ENCODE measurements at regions of chr21 and their contacts with region 1.

Region 1: DNA sequence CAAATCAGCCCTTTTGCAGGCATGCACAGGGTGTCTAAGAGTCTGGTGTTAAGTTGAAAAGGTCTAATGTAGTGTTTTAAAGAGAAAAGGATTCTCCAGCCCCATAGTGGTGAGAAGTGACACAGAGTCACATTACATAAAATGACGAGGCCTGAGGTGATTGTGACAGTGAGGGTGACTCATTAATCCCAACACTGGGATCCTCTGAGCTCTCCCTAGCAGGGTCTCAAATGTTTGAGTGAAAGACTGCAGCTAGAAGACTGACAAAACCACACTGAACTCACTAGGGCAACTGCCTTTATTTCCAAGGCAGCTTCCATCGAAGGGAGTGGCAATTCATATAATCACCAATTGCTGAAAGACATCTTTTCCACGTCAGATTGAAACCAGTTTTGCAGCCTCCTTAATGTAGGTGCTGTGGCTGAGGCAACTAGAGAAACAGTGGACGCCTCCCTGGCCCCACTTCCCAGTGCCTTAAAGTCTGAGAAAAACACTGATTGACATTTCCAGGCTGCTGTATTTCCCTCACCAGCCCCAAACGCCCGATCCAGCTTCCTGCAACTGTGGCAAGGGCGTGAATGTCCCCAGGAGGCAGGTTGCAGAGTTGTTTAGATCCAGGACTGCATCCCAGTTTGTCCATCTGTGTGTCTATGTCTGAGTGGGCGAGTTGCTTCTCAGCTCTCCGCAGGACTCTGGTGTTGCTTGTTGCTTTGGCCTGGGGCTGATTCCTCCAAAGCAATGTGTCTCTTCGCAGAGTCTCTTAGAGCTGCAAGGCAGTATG is 81.4 kb downstream of the RUNX1 start:
- DNase-seq: peak; percentile 75
- H3K4me3 Mint-ChIP-seq: peak overlapping the region; percentile 55
- H3K27ac Mint-ChIP-seq: peak overlapping the region; percentile 95
- H3K4me1 Mint-ChIP-seq: peaks cover 88% of the 10 kb centered on the region
- H3K27me3 Mint-ChIP-seq: no peaks in the 10 kb centered on the region

Region 2: DNA sequence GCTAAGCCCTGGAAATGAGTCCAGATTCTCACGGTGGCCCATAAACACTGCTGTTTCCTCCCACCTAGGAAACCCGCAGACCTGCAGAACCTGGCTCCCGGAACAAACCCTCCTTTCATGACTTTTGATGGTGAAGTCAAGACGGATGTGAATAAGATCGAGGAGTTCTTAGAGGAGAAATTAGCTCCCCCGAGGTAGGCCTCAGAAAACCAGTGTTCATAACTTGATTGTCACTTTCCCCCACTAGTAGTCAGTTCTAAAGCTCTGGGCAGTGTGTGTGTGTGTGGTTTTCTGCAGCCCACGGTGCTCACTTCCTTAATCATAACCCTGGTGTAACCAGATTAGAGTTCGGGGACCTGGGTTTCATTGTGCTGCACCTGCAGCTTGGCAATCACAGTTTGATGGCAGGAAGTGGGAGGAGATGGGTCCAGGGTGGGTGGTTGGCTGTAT is 259.8 kb before region 1 on chr21:
- CTCF ChIA-PET with region 1: no interaction called
- POLR2A ChIA-PET with region 1: no interaction called
- intact Hi-C with region 1: loop called (anchors 5 kb)
- DNase-seq: peak; percentile 85
- H3K4me3 Mint-ChIP-seq: no peak overlapping the region
- H3K27ac Mint-ChIP-seq: peak overlapping the region; percentile 15
- H3K4me1 Mint-ChIP-seq: peaks cover 20% of the 10 kb centered on the region
- H3K27me3 Mint-ChIP-seq: peaks cover 41% of the 10 kb centered on the region

Region 3: GRCh38 chr21:34933609-34934335 is 33.9 kb before region 1 on chr21:
- CTCF ChIA-PET with region 1: interaction called, 7 read pairs
- POLR2A ChIA-PET with region 1: interaction called, 12 read pairs
- intact Hi-C with region 1: loop called (anchors 1 kb)
- DNase-seq: peak; percentile 43
- H3K4me3 Mint-ChIP-seq: peak overlapping the region; percentile 77
- H3K27ac Mint-ChIP-seq: peak overlapping the region; percentile 97
- H3K4me1 Mint-ChIP-seq: peaks cover 83% of the 10 kb centered on the region
- H3K27me3 Mint-ChIP-seq: no peaks in the 10 kb centered on the region

Region 4: GRCh38 chr21:34946916-34947534 is 20.7 kb before region 1 on chr21:
- CTCF ChIA-PET with region 1: interaction called, 7 read pairs
- POLR2A ChIA-PET with region 1: interaction called, 13 read pairs
- intact Hi-C with region 1: loop called (anchors 1 kb)
- DNase-seq: no peak
- H3K4me3 Mint-ChIP-seq: no peak overlapping the region
- H3K27ac Mint-ChIP-seq: peak overlapping the region; percentile 88
- H3K4me1 Mint-ChIP-seq: peaks cover 90% of the 10 kb centered on the region
- H3K27me3 Mint-ChIP-seq: no peaks in the 10 kb centered on the region

Region 5: DNA sequence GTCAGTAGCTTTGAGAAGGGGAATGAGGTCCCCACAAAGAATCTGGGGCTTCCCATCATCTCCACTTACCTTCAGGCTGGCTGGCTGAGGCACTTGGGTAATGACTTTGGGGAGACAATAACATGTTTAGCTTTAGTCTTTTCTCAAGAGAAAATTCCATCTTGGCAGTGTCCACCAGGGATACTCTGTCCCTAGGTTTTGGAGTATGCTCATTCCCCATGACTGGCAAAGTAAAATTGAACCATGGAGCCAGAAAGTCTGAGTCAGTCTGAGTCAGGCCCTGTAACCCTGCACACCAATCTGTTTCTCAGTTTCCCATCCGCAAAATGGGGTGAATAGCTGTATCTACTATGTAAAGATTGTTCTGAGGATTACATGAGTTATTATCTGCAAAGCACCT is 53.2 kb after region 1 on chr21:
- CTCF ChIA-PET with region 1: no interaction called
- POLR2A ChIA-PET with region 1: interaction called, 5 read pairs
- intact Hi-C with region 1: loop called (anchors 1 kb)
- DNase-seq: no peak
- H3K4me3 Mint-ChIP-seq: no peak overlapping the region
- H3K27ac Mint-ChIP-seq: peak overlapping the region; percentile 65
- H3K4me1 Mint-ChIP-seq: peaks cover 85% of the 10 kb centered on the region
- H3K27me3 Mint-ChIP-seq: no peaks in the 10 kb centered on the region

Region 6: DNA sequence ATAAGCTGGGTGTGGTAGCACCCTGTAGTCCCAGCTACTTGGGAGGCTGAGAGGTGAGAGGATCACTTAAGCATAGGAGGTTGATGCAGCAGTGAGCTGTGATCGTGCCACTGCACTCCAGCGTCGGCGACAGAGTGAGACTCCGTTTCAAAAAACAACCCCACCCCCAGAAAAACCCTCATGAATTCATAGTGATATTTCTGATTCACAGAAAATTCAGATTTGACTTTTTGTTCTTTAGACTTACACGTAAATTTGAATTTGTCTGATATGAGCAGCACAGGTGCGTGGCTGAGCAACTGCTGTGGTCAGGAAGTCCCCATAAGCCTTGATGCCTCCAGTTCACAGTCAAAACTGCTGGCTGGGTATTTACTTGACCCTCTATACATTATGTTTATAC is 1342.3 kb after region 1 on chr21:
- CTCF ChIA-PET with region 1: no interaction called
- POLR2A ChIA-PET with region 1: no interaction called
- intact Hi-C with region 1: loop called (anchors 5 kb)
- DNase-seq: peak; percentile 86
- H3K4me3 Mint-ChIP-seq: peak overlapping the region; percentile 35
- H3K27ac Mint-ChIP-seq: peak overlapping the region; percentile 82
- H3K4me1 Mint-ChIP-seq: peaks cover 6% of the 10 kb centered on the region
- H3K27me3 Mint-ChIP-seq: no peaks in the 10 kb centered on the region